Adrenal gland (tissue), 19 donors: ENCODE measurements at regions of chr10 and their contacts with region 1.

Region 1: GRCh38 chr10:91635401-91636400 is 2.8 kb upstream of the PPP1R3C start:
- DNase-seq: peak; percentile 60 to 85 (median 79)
- H3K4me3 ChIP-seq: no peak overlapping the region
- H3K27ac ChIP-seq: no peak overlapping the region
- H3K4me1 ChIP-seq: peaks cover 4 to 29% of the 10 kb centered on the region in 2 donors
- H3K27me3 ChIP-seq: no peaks in the 10 kb centered on the region
- CTCF ChIP-seq: peak; percentile 61 to 91 (median 84)
- POLR2A ChIP-seq: no peak

Region 2: DNA sequence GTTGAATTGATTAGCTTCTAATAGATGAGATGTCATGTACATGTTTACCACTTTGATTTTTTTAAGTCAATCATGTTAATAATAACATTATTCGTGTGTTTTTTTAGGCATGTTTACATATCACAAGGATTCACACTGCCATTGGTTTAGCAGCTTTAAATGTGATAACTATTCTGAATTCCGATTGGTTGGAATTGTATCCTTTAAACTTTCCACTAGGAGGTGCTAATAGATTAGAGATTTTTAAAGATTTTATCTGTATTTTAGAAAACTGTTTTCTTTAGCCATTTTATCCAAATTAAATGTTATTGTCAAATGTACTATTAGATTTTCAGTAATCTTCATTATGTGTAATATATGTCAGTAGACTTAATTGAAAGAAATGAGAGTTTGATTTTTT is 142.4 kb before region 1 on chr10:
- intact Hi-C with region 1: loop called in 1 of 2 experiments (anchors 5 kb)
- DNase-seq: no peak
- H3K4me3 ChIP-seq: no peak overlapping the region
- H3K27ac ChIP-seq: no peak overlapping the region
- H3K4me1 ChIP-seq: no peaks in the 10 kb centered on the region
- H3K27me3 ChIP-seq: no peaks in the 10 kb centered on the region
- CTCF ChIP-seq: peak; percentile 46 to 74 (median 54)
- POLR2A ChIP-seq: no peak

Region 3: GRCh38 chr10:91511549-91512330 is 124.0 kb before region 1 on chr10:
- intact Hi-C with region 1: no loop called
- DNase-seq: no peak
- H3K4me3 ChIP-seq: no peak overlapping the region
- H3K27ac ChIP-seq: no peak overlapping the region
- H3K4me1 ChIP-seq: no peaks in the 10 kb centered on the region
- H3K27me3 ChIP-seq: no peaks in the 10 kb centered on the region
- CTCF ChIP-seq: no peak
- POLR2A ChIP-seq: no peak

Region 4: GRCh38 chr10:91551856-91552255 is 83.8 kb before region 1 on chr10:
- intact Hi-C with region 1: loop called (anchors 5 kb)
- DNase-seq: peak in 6 of 7 donors; percentile 21 to 59 (median 43)
- H3K4me3 ChIP-seq: no peak overlapping the region
- H3K27ac ChIP-seq: no peak overlapping the region
- H3K4me1 ChIP-seq: no peaks in the 10 kb centered on the region
- H3K27me3 ChIP-seq: no peaks in the 10 kb centered on the region
- CTCF ChIP-seq: peak; percentile 28 to 70 (median 58)
- POLR2A ChIP-seq: no peak

Region 5: DNA sequence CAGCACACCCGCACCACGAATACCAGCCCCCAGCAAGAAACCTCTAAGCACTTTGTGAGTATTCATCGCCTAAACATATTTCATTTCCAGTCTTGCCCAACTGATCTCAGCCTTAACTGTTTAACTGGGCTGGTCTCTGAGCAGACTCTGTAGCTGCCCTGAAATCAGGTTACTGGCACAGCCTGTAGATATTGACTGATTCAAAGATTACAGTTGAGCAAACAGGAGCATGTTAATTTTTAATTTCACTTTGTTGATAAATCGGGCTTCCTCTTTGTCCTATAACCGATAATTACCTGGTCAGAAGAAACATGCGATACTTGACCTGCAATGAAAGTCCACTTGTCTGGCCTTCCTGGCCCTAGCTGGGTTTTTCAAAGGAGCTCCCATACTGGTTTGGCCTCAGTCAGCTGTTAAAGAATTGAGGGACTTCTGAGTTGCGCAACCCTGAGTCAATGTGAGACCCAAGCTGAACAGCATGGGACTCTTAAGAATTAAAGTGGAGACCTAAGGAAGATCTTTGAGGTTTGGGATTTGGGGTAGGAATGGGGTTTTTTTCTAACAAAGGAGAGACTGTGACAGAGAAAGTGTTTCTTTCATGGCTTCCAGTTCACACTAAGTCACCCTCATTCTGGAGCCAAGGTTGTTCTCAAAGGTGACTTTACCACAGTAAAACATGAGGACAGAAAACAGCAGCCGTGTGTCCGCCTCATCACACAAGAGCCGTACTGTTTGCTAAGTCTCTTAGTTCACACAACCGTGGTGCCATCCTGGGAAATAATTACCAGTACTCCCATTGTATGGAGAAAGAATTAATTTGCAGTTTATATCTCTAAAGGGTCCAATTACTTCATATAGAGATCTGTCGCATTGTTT is 78.8 kb before region 1 on chr10:
- intact Hi-C with region 1: loop called (anchors 5 kb)
- DNase-seq: no peak
- H3K4me3 ChIP-seq: no peak overlapping the region
- H3K27ac ChIP-seq: no peak overlapping the region
- H3K4me1 ChIP-seq: no peaks in the 10 kb centered on the region
- H3K27me3 ChIP-seq: no peaks in the 10 kb centered on the region
- CTCF ChIP-seq: no peak
- POLR2A ChIP-seq: no peak

Region 6: DNA sequence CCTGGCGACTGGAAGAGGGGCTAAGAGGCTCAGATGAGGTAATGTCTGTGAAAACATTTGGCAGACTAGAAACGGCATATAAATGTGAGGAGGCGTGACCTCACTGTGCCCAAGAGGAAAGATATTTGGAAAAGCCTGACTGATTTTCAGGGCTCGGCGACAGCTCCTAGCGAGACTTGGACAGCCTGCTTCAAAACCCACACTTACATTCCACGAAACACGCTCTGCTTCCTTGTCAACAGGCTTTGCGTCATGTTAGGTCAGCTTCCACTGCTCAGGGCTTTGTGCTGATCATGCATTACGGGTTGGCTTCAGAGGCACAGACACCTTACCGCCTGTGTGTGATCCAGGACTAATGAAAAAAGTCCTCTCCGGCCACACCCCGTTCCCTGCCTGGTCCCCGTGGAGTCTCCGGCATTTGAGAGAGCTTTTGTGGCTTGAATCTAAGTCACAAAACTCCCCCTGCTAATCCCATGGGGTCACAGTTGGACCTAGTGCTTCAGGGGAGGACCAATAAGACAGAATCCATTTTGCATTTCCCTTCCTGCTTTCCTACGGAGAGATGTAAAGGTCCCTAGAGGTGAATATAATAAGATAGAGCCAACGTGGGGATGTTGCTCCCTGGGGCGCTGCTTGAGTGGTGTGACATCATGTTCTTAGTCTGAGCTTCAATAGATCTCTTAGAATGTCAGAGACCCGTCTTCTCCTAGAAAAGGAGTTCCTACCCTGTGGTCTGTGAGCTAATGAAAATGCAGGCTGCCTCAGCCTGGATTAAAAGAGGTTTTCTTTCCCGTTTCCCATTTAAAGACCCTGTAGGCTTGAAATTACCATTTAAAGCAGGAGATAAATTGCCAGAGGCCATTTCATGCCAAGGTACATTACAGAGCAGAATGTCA is 248.1 kb after region 1 on chr10:
- intact Hi-C with region 1: no loop called
- DNase-seq: peak in 1 of 7 donors; percentile 66
- H3K4me3 ChIP-seq: no peak overlapping the region
- H3K27ac ChIP-seq: peak overlapping the region in 1 of 5 donors; percentile 27
- H3K4me1 ChIP-seq: peaks cover 8 to 13% of the 10 kb centered on the region in 2 donors
- H3K27me3 ChIP-seq: no peaks in the 10 kb centered on the region
- CTCF ChIP-seq: no peak
- POLR2A ChIP-seq: no peak